ENCODE measurements at regions of chr2 and their contacts with region 1.

Region 1: DNA sequence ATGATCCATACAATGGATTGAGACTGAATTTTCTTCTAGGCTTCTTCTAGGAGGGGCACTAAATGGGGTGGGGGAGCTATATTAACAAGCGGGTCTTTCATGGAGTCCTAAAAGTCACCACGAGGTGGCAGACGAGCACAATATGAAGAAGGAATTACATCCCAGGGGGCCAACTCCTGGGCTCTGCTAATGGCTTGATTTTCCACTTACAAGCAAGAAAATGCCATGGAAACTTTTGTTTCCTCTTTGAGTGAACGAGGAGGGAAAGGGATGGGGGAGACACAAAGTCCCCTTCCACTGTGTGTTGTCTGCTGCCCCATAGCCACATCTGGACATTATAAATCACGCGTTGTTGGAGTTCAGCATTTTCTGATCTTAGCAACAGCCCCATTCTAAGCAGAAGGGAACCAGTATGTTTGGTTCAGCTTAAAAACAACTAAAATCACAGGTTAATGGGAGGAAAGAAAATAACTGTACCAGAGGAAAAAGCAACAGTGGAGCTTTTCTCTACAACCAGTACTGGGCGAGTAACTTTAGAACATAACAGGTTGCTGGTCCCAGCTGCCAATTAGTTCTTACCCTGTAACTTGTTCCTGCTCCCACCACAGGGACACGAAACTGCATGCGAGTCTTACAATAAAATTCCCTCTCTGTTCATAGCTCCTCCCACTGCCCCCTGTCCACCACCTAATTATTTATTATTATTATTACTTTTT is 285.0 kb upstream of the PARD3B start:
- DNase-seq: peak; percentile 82
- ATAC-seq: peak; percentile 74
- H3K4me3 Mint-ChIP-seq: no peak overlapping the region
- H3K27ac Mint-ChIP-seq: no peak overlapping the region
- H3K4me1 Mint-ChIP-seq: peaks cover 42% of the 10 kb centered on the region
- H3K27me3 Mint-ChIP-seq: no peaks in the 10 kb centered on the region
- CTCF ChIP-seq: peak; percentile 51

Region 2: GRCh38 chr2:204145263-204145751 is 115.0 kb before region 1 on chr2:
- CTCF ChIA-PET with region 1: interaction called, 27 read pairs
- POLR2A ChIA-PET with region 1: no interaction called
- DNase-seq: peak; percentile 87
- ATAC-seq: peak; percentile 95
- H3K4me3 Mint-ChIP-seq: peak overlapping the region; percentile 59
- H3K27ac Mint-ChIP-seq: no peak overlapping the region
- H3K4me1 Mint-ChIP-seq: peaks cover 31% of the 10 kb centered on the region
- H3K27me3 Mint-ChIP-seq: no peaks in the 10 kb centered on the region
- CTCF ChIP-seq: peak; percentile 83

Region 3: GRCh38 chr2:204313256-204313655 is 52.9 kb after region 1 on chr2:
- CTCF ChIA-PET with region 1: interaction called, 12 read pairs
- POLR2A ChIA-PET with region 1: no interaction called
- DNase-seq: no peak
- ATAC-seq: peak; percentile 86
- H3K4me3 Mint-ChIP-seq: no peak overlapping the region
- H3K27ac Mint-ChIP-seq: peak overlapping the region; percentile 91
- H3K4me1 Mint-ChIP-seq: peaks cover 45% of the 10 kb centered on the region
- H3K27me3 Mint-ChIP-seq: no peaks in the 10 kb centered on the region
- CTCF ChIP-seq: no peak

Region 4: DNA sequence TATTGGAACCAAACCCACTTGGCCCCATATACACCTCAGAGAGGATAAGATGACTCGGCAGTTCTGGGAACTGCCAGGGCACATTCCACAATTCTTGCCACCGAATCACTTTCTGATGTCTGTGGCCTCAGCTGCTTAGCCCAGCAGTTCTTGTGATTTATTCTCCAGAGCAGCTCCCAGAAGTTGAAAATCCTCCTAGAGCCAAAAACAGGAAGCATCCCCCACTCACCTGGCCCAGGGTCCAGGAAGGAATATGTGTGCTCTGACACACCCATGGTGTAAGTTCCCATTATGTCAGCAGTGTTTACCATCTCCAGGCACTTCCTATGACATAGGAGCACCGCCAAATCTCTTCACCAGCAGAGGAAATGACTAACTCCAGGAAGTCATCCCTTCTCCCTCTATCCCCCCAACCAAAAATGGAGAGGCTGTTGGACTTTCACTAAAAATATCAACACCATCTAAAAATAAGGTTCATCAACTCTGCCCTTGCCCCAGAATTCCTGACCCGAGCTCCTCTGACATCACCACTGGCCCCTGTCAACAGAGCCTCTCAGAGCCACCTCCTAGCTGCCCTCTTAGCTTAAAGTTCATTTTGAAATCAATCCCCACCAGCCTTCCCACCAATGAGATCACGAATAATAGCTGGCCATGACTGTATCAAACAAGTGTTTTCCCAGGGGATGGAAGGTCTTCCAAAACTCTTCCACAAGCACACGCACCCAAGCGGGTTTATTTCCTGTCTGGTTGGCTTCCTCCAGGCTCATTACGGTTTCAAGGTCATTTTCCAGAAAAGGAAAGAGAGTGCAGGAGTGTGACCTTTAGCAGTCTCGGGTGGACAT is 61.8 kb after region 1 on chr2:
- CTCF ChIA-PET with region 1: interaction called, 11 read pairs
- POLR2A ChIA-PET with region 1: no interaction called
- DNase-seq: no peak
- ATAC-seq: no peak
- H3K4me3 Mint-ChIP-seq: no peak overlapping the region
- H3K27ac Mint-ChIP-seq: no peak overlapping the region
- H3K4me1 Mint-ChIP-seq: peaks cover 14% of the 10 kb centered on the region
- H3K27me3 Mint-ChIP-seq: no peaks in the 10 kb centered on the region
- CTCF ChIP-seq: no peak

Region 5: GRCh38 chr2:204691911-204692510 is 431.7 kb after region 1 on chr2:
- CTCF ChIA-PET with region 1: interaction called, 18 read pairs
- POLR2A ChIA-PET with region 1: no interaction called
- DNase-seq: peak; percentile 17
- ATAC-seq: peak; percentile 85
- H3K4me3 Mint-ChIP-seq: no peak overlapping the region
- H3K27ac Mint-ChIP-seq: no peak overlapping the region
- H3K4me1 Mint-ChIP-seq: peaks cover 12% of the 10 kb centered on the region
- H3K27me3 Mint-ChIP-seq: no peaks in the 10 kb centered on the region
- CTCF ChIP-seq: 0 out of 2 replicates have a peak, but pooled peaks have one; percentile 34

Measured in WTC11 (cell line).